Left colon (tissue), 2 donors: ENCODE measurements at regions of chr16 and their contacts with region 1.

Region 1: GRCh38 chr16:8936421-8936820 is 27.3 kb downstream of the USP7 start:
- DNase-seq: peak in 1 of 2 donors; percentile 65
- ATAC-seq: peak; percentile 82

Region 2: GRCh38 chr16:8621572-8622314 is 314.7 kb before region 1 on chr16 and contains the start of gene METTL22:
- intact Hi-C with region 1: no loop called
- DNase-seq: peak; percentile 86 to 95
- ATAC-seq: peak; percentile 100
- total RNA-seq, gene METTL22: 25.4 to 35.7 TPM

Region 3: GRCh38 chr16:9008601-9009260 is 72.3 kb after region 1 on chr16:
- intact Hi-C with region 1: loop called in 1 of 2 experiments (anchors 10 kb)
- DNase-seq: peak; percentile 72 to 88
- ATAC-seq: peak; percentile 85